Left cardiac atrium (tissue), 4 donors: ENCODE measurements at regions of chr13 and their contacts with region 1.

Region 1: GRCh38 chr13:42594970-42595571 is 21.1 kb downstream of the TNFSF11 start:
- DNase-seq: peak; percentile 48
- ATAC-seq: peak; percentile 30 to 62

Region 2: DNA sequence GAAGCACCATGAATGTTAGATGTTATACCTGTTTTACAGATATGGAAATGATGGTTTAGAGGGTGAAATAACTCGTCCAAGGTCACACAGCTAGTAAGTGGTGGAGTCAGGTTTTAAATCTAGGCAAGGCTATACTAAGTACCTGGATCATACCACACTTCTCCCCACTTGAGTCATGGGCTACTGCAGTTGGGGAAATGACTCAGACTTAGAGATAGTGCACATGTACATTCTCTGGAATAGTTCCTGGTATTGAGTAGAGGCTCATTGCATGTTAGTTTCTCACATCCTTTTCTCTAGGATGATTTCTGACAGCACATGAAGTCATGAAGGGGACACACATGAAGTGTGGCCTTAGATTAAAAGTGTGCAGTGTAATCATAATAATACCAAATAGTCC is 97.3 kb before region 1 on chr13:
- intact Hi-C with region 1: no loop called
- DNase-seq: no peak
- ATAC-seq: peak in 1 of 2 donors; percentile 54

Region 3: DNA sequence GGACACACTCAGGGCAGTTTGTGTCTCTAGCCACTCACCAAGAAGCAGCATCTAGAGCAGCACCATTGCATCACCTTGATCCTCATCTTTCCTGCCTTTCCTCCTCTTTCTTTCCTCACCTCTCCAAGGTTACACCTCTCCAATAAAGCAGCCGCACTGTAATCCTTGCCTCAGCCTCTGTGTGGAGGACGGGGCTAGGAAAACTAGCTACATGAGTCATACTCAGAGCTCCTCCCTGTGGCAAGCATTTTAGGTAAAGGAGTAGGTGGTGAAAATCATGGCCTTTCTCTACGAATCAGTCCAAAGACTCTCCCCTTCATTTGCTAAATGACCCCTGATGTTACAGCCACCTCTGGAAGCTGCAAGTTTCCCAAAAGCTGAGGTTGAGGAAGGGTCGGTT is 537.2 kb after region 1 on chr13:
- intact Hi-C with region 1: loop called (anchors 5 to 10 kb)
- DNase-seq: no peak
- ATAC-seq: peak; percentile 51 to 78

Region 4: DNA sequence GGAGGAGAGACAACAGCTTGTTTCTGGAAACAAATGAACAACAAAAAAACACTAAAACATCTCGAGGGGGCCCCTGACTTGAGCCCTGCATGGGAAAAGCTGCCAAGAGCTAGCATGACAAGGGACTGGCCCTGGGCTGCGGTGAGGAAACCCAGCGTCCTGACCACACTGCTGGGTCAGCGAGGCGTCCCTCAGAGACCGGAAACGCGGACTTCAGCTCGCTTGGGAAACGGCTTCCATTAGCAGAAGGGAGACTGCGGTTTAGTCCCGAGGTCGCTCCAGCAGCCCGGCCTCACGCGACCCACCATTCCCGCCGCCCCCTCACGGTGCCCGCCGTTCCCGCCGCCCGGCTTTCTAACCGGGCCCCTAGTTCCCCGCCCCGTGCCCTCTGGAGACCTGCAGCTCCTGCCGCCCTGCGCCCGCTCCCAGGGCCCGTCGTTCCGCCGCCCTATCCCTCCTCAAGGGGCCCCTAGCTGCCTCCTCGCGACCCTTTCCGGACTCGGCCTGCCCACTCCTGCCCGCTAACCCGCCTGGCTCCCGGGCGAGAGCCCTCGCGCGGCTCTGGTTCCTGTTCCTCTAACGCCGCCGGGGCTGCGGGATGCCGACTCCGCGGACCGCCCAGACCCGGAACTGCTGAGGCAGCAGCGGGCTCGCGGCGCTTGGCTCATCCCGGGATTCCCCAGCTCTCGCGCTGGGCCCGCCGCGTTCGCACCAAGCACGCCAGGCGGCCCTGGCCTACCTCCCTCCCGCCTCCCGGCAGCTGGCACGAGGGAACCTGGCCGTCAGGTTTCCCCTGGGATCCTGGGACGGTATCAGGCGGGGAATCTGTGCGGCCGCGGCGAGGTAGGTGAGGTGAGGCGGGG is 1284.1 kb after region 1 on chr13 and contains the start of gene CCDC122:
- intact Hi-C with region 1: loop called in 1 of 2 experiments (anchors 10 kb)
- DNase-seq: peak; percentile 91
- ATAC-seq: peak; percentile 92 to 94
- total RNA-seq, gene CCDC122: 3.2 to 10.0 TPM